B cell (primary cell): ENCODE measurements at regions of chr22 and their contacts with region 1.

Region 1: GRCh38 chr22:40396882-40397281 is 26.5 kb downstream of the SGSM3 start:
- DNase-seq: no peak
- ATAC-seq: no peak
- H3K4me3 ChIP-seq: no peak overlapping the region
- H3K4me3 Mint-ChIP-seq: peak overlapping the region; percentile 56
- H3K27ac ChIP-seq: peak overlapping the region; percentile 46 to 96
- H3K27ac Mint-ChIP-seq: peak overlapping the region; percentile 92
- H3K4me1 ChIP-seq: peaks cover 86% of the 10 kb centered on the region in 2 donors
- H3K4me1 Mint-ChIP-seq: peaks cover 79% of the 10 kb centered on the region
- H3K27me3 ChIP-seq: no peaks in the 10 kb centered on the region
- H3K27me3 Mint-ChIP-seq: no peaks in the 10 kb centered on the region
- CTCF ChIP-seq: no peak

Region 2: GRCh38 chr22:40385036-40385782 is 11.7 kb before region 1 on chr22:
- CTCF ChIA-PET with region 1: interaction called, 28 read pairs
- POLR2A ChIA-PET with region 1: interaction called, 5 read pairs
- intact Hi-C with region 1: loop called (anchors 1 kb)
- DNase-seq: peak; percentile 82
- ATAC-seq: peak; percentile 98
- H3K4me3 ChIP-seq: peak overlapping the region; percentile 18 to 63 (median 50)
- H3K4me3 Mint-ChIP-seq: peak overlapping the region; percentile 85
- H3K27ac ChIP-seq: peak overlapping the region; percentile 82 to 87
- H3K27ac Mint-ChIP-seq: peak overlapping the region; percentile 92
- H3K4me1 ChIP-seq: peaks cover 59 to 75% of the 10 kb centered on the region in 2 donors
- H3K4me1 Mint-ChIP-seq: peaks cover 63% of the 10 kb centered on the region
- H3K27me3 ChIP-seq: no peaks in the 10 kb centered on the region
- H3K27me3 Mint-ChIP-seq: no peaks in the 10 kb centered on the region
- CTCF ChIP-seq: peak; percentile 30

Region 3: GRCh38 chr22:40412441-40412840 is 15.6 kb after region 1 on chr22:
- CTCF ChIA-PET with region 1: interaction called, 5 read pairs
- POLR2A ChIA-PET with region 1: no interaction called
- intact Hi-C with region 1: loop called (anchors 1 kb)
- DNase-seq: peak; percentile 77
- ATAC-seq: peak; percentile 32
- H3K4me3 ChIP-seq: no peak overlapping the region
- H3K4me3 Mint-ChIP-seq: peak overlapping the region; percentile 66
- H3K27ac ChIP-seq: peak overlapping the region; percentile 54 to 57
- H3K27ac Mint-ChIP-seq: peak overlapping the region; percentile 83
- H3K4me1 ChIP-seq: peaks cover 62 to 63% of the 10 kb centered on the region in 2 donors
- H3K4me1 Mint-ChIP-seq: peaks cover 53% of the 10 kb centered on the region
- H3K27me3 ChIP-seq: no peaks in the 10 kb centered on the region
- H3K27me3 Mint-ChIP-seq: no peaks in the 10 kb centered on the region
- CTCF ChIP-seq: no peak